GM12878 (cell line): ENCODE measurements at regions of chr9 and their contacts with region 1.

Region 1: DNA sequence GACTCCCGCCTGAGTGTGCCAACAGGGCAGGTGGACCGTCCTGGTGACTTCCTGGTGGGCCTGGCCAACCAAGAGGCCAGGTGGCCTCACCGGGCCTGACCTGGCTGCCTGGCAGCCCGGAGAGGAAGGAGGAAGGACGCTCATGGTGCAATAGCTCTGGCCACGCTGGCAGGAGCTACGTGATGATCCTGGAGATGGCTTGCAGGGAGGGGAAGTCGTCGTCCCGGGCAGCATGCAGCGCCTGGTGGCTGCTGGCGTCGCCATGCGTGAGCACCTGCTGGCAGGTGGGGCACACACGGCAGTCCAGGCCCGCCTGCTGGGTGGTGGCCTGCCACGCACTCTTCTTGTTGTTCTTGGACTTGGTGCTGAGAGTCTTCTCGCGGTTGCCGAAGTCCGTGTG is 26.3 kb downstream of the SPATA31C1 start:
- DNase-seq: no peak
- ATAC-seq: no peak
- H3K4me3 ChIP-seq: no peak overlapping the region
- H3K27ac ChIP-seq: no peak overlapping the region
- H3K4me1 ChIP-seq: no peaks in the 10 kb centered on the region
- H3K27me3 ChIP-seq: no peaks in the 10 kb centered on the region
- CTCF ChIP-seq: no peak
- EP300 ChIP-seq: no peak
- POLR2A ChIP-seq: no peak
- RAD21 ChIP-seq: no peak

Region 2: DNA sequence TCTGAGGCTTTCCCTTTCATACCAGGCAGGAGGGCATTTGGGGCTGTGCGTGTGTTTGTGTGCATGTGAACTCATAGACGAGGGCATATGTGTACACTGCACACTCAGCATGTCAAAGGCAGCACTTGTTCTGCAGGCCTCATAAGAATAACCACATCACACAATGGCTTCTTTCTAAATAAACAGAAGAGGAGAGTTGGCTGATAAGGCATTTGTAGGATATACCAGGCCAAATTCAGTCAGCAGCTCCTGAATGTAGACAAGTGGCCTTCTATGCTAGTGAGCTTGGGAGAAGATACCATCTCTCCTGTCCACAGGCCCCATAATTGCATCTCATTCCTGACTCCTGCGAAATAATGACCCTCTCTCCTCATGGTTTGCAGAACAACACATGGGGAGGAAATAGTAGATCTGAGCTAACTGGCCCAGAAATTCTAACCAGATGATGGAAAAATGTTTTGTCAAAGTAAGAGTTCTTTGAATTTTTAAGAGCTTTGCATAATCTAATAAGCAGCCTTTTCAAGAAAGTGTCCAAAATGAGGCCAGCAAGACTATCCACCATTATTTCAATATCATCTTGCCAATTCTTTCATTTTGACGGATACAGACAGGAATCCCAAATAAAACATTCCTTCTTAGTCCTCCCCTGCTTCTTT is 936.3 kb before region 1 on chr9:
- CTCF ChIA-PET with region 1: no interaction called
- POLR2A ChIA-PET with region 1: no interaction called
- RAD21 ChIA-PET with region 1: no interaction called
- SMC1A ChIA-PET with region 1: no interaction called
- in situ Hi-C with region 1: no loop called
- intact Hi-C with region 1: no loop called
- DNase-seq: no peak
- ATAC-seq: no peak
- H3K4me3 ChIP-seq: no peak overlapping the region
- H3K27ac ChIP-seq: no peak overlapping the region
- H3K4me1 ChIP-seq: no peaks in the 10 kb centered on the region
- H3K27me3 ChIP-seq: no peaks in the 10 kb centered on the region
- CTCF ChIP-seq: no peak
- EP300 ChIP-seq: no peak
- POLR2A ChIP-seq: no peak
- RAD21 ChIP-seq: no peak

Region 3: DNA sequence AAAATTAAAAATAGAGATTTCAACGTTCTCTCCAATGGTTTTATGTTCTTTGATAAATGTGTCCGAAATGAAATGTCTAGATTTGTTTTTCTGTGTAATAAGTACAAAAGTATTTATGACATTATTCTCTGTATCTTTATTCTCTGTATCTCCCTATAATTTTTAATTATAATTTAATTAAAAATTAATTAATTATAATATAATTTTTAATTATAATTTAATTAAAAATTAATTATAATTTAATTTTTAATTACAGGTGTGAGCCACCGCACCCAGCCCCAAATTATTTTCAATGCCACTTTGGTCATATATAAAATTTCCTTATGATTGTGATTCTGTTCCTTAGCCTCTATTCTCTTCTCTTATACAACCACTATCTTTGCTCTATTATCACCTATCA is 165.9 kb after region 1 on chr9:
- CTCF ChIA-PET with region 1: no interaction called
- POLR2A ChIA-PET with region 1: no interaction called
- RAD21 ChIA-PET with region 1: no interaction called
- SMC1A ChIA-PET with region 1: no interaction called
- in situ Hi-C with region 1: loop called (anchors 5 kb)
- intact Hi-C with region 1: no loop called
- DNase-seq: no peak
- ATAC-seq: no peak
- H3K4me3 ChIP-seq: no peak overlapping the region
- H3K27ac ChIP-seq: no peak overlapping the region
- H3K4me1 ChIP-seq: no peaks in the 10 kb centered on the region
- H3K27me3 ChIP-seq: no peaks in the 10 kb centered on the region
- CTCF ChIP-seq: no peak
- EP300 ChIP-seq: no peak
- POLR2A ChIP-seq: no peak
- RAD21 ChIP-seq: no peak